ENCODE measurements at regions of chr10 and their contacts with region 1.

Region 1: GRCh38 chr10:35218339-35218955 is 91.8 kb downstream of the CREM start:
- DNase-seq: peak; percentile 90
- ATAC-seq: peak; percentile 91
- H3K4me3 ChIP-seq: no peak overlapping the region
- H3K27ac ChIP-seq: no peak overlapping the region
- H3K4me1 ChIP-seq: no peaks in the 10 kb centered on the region; the same call in 1 of the 2 replicates
- H3K27me3 ChIP-seq: no peaks in the 10 kb centered on the region
- CTCF ChIP-seq: peak; percentile 87
- POLR2A ChIP-seq: no peak
- RAD21 ChIP-seq: peak; percentile 79

Region 2: DNA sequence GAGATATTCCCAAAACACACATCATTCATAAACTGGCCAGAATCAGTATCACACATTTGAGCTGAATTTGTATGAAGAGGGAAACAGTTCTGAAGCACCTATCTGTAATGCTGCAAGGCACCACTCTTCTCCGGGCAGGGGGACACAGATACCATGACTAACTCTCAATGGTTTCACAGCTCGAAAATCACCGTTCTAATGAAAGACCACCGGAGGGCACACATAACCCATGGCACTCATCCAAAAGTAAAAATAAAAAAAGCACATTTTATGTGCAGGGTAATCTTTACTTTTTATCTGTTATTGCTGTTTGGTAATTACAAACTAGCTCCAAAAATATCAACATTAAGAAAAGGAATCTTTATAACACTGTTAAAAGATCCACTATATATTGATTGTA is 540.9 kb before region 1 on chr10:
- CTCF ChIA-PET with region 1: no interaction called
- POLR2A ChIA-PET with region 1: no interaction called
- dilution Hi-C with region 1: no loop called
- in situ Hi-C with region 1: loop called (anchors 10 kb)
- intact Hi-C with region 1: no loop called
- DNase-seq: no peak
- ATAC-seq: no peak
- H3K4me3 ChIP-seq: no peak overlapping the region
- H3K27ac ChIP-seq: no peak overlapping the region
- H3K4me1 ChIP-seq: no peaks in the 10 kb centered on the region
- H3K27me3 ChIP-seq: no peaks in the 10 kb centered on the region
- CTCF ChIP-seq: no peak
- POLR2A ChIP-seq: no peak
- RAD21 ChIP-seq: no peak

Region 3: DNA sequence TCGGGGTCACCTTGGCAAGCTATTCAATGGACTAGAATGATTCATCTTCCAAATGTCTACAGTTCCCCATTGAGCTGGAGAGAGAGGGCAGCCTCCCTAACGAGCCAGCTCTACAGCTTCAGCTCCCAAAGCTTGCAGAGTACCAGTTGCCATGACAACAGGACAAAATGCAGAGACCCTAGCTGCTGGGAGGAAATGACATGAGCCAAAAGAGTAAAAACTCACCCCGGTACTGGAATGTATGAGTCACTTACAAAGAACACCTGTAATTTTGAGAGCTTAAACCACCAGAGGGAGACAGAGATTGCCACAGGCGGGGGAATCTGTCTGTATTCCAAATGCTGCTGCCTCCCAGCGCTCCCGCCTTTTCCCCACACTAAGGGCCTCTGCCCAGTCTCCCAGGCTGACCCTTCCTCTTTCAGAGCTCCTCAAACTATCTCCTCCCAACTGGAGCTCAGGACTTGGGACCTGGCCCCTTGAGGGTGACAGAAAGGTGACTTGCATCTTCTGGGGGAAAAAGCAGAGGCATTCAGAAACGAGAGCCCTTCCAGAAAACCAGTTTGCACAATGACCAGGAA is 223.8 kb before region 1 on chr10:
- CTCF ChIA-PET with region 1: interaction called, 7 read pairs
- POLR2A ChIA-PET with region 1: no interaction called
- dilution Hi-C with region 1: no loop called
- in situ Hi-C with region 1: no loop called
- intact Hi-C with region 1: loop called (anchors 5 kb)
- DNase-seq: peak; percentile 76
- ATAC-seq: peak; percentile 62
- H3K4me3 ChIP-seq: no peak overlapping the region
- H3K27ac ChIP-seq: no peak overlapping the region
- H3K4me1 ChIP-seq: peaks cover 2% of the 10 kb centered on the region; the same call in 1 of the 2 replicates
- H3K27me3 ChIP-seq: no peaks in the 10 kb centered on the region
- CTCF ChIP-seq: peak; percentile 66
- POLR2A ChIP-seq: no peak
- RAD21 ChIP-seq: peak; percentile 69

Region 4: DNA sequence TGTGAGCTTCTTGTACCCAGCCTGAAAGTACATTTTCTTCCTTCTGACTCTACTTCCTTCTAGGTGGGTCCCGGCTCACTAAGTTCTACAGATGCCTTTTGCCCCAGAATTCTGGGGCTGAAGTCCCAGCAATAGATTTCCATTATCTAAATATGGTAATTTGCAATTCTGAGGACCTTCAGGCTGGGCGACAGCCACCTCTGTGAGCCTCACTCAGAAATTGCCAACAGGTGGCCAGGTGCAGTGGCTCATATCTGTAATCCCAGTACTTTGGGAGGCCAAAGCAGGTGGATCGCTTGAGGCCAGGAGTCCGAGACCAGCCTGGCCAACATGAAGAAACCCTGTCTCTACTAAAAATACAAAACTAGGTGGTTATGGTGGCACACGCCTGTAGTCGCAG is 68.1 kb before region 1 on chr10:
- CTCF ChIA-PET with region 1: no interaction called
- POLR2A ChIA-PET with region 1: no interaction called
- dilution Hi-C with region 1: no loop called
- in situ Hi-C with region 1: no loop called
- intact Hi-C with region 1: no loop called
- DNase-seq: no peak
- ATAC-seq: no peak
- H3K4me3 ChIP-seq: no peak overlapping the region
- H3K27ac ChIP-seq: no peak overlapping the region
- H3K4me1 ChIP-seq: no peaks in the 10 kb centered on the region
- H3K27me3 ChIP-seq: no peaks in the 10 kb centered on the region
- CTCF ChIP-seq: no peak
- POLR2A ChIP-seq: no peak
- RAD21 ChIP-seq: no peak

Measured in IMR-90 (cell line).